A549 (cell line): ENCODE measurements at regions of chr15 and their contacts with region 1.

Region 1: DNA sequence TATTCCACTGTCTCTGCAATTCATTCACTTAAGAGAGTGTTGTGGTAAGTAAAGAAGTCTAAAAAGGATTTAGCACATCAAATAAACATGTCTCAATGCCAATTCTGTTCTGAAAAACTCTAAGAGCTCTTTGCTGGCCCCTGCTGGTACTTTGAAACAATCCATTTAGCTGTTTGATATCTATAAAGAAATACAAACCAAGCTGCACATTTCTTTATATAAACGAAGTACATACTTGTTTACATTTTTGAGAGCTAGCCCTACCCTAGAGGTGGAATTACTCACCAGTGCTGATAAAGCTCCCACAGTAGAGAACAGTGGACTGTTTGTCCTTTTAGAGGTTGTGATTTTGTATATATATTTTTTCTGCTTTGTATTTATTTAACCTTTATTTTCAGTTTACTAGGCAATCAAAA is 75.5 kb downstream of the NEDD4 start:
- DNase-seq: peak; percentile 49 to 91
- ATAC-seq: peak; percentile 75 to 94
- H3K4me3 ChIP-seq: no peak overlapping the region
- H3K27ac ChIP-seq: peak overlapping the region; percentile 30 to 74; a peak in 4 of 6 replicates
- H3K4me1 ChIP-seq: peaks cover 17% of the 10 kb centered on the region; the same call in 2 of the 3 replicates
- CTCF ChIP-seq: peak; percentile 96
- EP300 ChIP-seq: no peak
- POLR2A ChIP-seq: no peak
- RAD21 ChIP-seq: peak; percentile 87 to 92

Region 2: GRCh38 chr15:55907797-55908196 is 10.1 kb before region 1 on chr15:
- CTCF ChIA-PET with region 1: interaction called, 17 read pairs
- POLR2A ChIA-PET with region 1: interaction called, 25 read pairs
- DNase-seq: peak; percentile 73 to 92
- ATAC-seq: peak; percentile 91 to 95
- H3K4me3 ChIP-seq: no peak overlapping the region; the same call in 2 of the 3 replicates
- H3K27ac ChIP-seq: peak overlapping the region; percentile 88 to 93
- H3K4me1 ChIP-seq: peaks cover 63% of the 10 kb centered on the region
- CTCF ChIP-seq: no peak
- EP300 ChIP-seq: peak; percentile 86 to 94; a peak in 4 of 5 replicates
- POLR2A ChIP-seq: no peak
- RAD21 ChIP-seq: 0 out of 5 replicates have a peak, but pooled peaks of 1 of the 2 experiments have one; percentile 23

Region 3: DNA sequence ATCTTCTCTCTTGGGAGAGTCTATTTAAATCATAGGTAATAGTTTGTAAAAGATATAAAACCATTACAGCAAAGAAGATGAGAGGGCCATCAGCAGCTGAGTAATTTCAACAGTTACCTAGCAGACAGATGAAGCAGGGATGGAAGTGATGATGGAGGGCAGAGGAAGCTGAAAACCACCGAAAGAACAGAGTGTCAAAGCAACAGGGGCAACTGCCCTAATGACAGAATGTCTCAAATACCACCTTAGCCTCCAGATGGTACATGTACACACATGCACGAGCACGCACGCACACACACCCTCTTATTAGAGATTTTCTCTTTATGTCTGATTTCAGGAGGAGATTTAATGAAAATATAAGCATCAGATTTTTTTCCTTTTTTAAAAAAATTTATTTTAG is 11.1 kb after region 1 on chr15:
- CTCF ChIA-PET with region 1: interaction called, 17 read pairs
- POLR2A ChIA-PET with region 1: no interaction called
- DNase-seq: no peak
- ATAC-seq: no peak
- H3K4me3 ChIP-seq: no peak overlapping the region
- H3K27ac ChIP-seq: no peak overlapping the region
- H3K4me1 ChIP-seq: no peaks in the 10 kb centered on the region
- CTCF ChIP-seq: no peak
- EP300 ChIP-seq: no peak
- POLR2A ChIP-seq: no peak
- RAD21 ChIP-seq: no peak